AG04450 (cell line): ENCODE measurements at regions of chr11 and their contacts with region 1.

Region 1: DNA sequence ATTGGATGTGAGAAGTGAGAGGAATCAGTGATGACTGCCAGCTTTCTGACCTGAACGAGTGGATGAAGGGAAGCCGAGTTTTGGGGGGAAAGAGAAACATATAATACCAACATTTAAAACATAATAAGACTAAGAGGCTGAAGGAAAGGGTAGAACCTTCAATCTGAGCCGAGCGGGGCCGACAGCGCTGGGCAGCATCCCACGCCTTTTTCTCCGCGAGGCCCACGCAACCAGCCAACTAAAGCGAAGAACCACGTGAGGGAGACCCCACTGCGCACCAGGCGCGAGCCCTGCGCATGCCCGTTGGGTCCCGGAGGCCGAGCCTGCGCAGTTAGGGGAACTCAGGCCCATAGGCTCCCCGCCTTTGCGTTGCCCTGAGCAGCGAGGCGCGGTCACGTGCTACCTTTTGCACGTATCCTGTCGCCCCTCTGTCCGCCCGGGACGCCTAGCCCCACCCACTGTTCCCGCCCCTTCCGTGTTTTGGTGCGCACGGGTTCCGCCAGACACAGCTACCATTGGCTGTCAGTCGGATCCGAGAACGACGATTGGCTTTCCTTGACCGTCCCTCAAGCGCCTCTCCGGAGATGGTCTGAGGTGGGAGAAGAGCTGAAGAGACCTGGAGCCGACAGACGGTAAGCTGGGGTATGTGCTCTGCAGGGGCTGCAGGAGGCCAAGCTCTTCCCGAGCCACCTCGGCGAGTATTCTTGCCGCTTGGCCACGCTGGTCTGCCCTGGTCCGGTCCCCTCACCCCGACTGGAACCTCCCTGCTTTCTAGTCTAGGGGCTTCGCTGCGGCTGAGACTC is at the start of gene HINFP:
- DNase-seq: peak; percentile 97
- H3K4me3 ChIP-seq: peak within 1 kb of the TSS; percentile 100
- H3K27ac ChIP-seq: peak within 1 kb of the TSS; percentile 70
- H3K27me3 ChIP-seq: no peaks in the 10 kb centered on the region
- CTCF ChIP-seq: no peak
- polyA plus RNA-seq, gene HINFP: 14.9 and 16.4 TPM in 2 replicates

Region 2: DNA sequence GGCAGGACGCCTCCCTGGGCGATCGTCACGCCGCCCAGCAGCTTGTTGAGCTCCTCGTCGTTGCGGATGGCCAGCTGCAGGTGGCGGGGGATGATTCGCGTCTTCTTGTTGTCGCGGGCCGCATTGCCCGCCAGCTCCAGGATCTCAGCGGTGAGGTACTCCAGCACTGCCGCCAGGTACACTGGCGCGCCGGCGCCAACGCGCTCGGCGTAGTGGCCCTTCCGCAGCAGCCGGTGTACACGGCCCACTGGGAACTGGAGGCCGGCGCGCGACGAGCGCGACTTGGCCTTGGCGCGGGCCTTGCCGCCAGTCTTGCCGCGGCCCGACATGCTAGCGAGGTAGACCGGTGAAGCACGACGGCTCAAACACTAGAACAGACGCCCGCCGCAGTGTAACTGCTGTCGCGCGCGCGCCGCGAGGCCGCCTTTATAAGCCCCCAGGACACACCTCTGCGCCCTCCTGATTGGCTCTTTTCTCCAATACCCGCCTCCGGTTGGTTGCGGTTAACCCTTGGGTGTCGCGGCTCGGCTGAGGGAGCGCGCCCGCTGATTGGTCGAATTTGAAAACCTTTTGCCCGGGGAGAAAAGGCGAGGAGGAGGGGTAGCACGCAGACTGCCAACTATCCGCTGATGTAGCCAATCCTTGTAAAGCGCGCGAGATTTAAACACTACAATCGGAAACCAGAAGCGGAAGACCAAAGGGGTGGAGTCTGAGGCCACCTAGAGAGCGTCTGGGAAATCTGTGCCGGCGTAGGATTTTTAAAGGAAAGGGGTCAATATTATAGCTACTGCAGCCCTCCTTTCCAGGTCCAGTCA is 25.9 kb before region 1 on chr11:
- CTCF ChIA-PET with region 1: interaction called, 3 read pairs
- POLR2A ChIA-PET with region 1: interaction called, 13 read pairs
- DNase-seq: peak; percentile 100
- H3K4me3 ChIP-seq: peak overlapping the region; percentile 76
- H3K27ac ChIP-seq: peak overlapping the region; percentile 70
- H3K27me3 ChIP-seq: no peaks in the 10 kb centered on the region
- CTCF ChIP-seq: no peak

Region 3: GRCh38 chr11:119101759-119102423 is 19.3 kb before region 1 on chr11 and contains the start of gene DPAGT1:
- CTCF ChIA-PET with region 1: interaction called, 4 read pairs
- POLR2A ChIA-PET with region 1: interaction called, 11 read pairs
- DNase-seq: peak; percentile 91
- H3K4me3 ChIP-seq: peak within 1 kb of the TSS; percentile 87
- H3K27ac ChIP-seq: peak within 1 kb of the TSS; percentile 93
- H3K27me3 ChIP-seq: no peaks in the 10 kb centered on the region
- CTCF ChIP-seq: no peak
- polyA plus RNA-seq, gene DPAGT1: 59.2 and 62.5 TPM in 2 replicates

Region 4: DNA sequence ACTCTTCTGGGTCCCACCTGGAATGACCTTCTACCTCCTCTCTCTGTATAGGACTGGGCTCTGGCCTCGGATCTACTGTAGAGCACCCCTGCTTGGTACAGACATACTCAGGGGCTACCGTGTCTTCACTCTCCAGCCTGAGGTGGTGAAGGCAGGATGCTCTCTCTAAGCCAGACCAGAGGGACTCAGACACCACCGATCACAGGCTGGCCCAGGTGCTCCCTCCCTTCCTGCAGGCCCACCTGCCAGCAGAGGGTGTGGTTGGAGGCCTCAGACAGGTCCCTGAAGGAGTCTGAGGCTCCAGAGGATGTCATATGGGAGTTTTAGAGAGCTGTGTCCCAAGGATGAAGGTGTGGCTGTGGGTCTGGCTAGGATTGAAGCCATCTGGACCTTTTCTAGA is 68.2 kb after region 1 on chr11:
- CTCF ChIA-PET with region 1: no interaction called
- POLR2A ChIA-PET with region 1: no interaction called
- DNase-seq: no peak
- H3K4me3 ChIP-seq: no peak overlapping the region
- H3K27ac ChIP-seq: no peak overlapping the region
- H3K27me3 ChIP-seq: peaks cover 26% of the 10 kb centered on the region
- CTCF ChIP-seq: no peak

Region 5: DNA sequence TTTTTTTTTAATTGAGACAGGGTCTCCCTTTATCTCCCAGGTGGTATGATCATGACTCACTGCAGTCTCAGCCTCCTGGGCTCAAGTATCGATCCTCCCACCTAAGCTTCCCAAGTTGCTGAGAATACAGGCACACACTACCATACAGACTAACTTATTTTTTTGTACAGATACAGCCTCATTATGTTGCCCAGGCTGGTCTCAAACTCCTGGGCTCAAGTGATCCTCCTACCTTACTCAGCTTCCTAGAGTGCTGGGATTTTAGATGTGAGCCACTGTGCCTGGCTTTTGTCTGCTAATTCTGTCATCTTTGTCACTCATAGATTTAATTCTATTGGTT is 128.4 kb after region 1 on chr11:
- CTCF ChIA-PET with region 1: no interaction called
- POLR2A ChIA-PET with region 1: no interaction called
- DNase-seq: no peak
- H3K4me3 ChIP-seq: no peak overlapping the region
- H3K27ac ChIP-seq: no peak overlapping the region
- H3K27me3 ChIP-seq: no peaks in the 10 kb centered on the region
- CTCF ChIP-seq: no peak